GM13977 (cell line): ENCODE measurements at regions of chr20 and their contacts with region 1.

Region 1: GRCh38 chr20:39049684-39050554 is 87.8 kb downstream of the DHX35 start:
- DNase-seq: peak; percentile 87
- CTCF ChIP-seq: peak; percentile 100

Region 2: DNA sequence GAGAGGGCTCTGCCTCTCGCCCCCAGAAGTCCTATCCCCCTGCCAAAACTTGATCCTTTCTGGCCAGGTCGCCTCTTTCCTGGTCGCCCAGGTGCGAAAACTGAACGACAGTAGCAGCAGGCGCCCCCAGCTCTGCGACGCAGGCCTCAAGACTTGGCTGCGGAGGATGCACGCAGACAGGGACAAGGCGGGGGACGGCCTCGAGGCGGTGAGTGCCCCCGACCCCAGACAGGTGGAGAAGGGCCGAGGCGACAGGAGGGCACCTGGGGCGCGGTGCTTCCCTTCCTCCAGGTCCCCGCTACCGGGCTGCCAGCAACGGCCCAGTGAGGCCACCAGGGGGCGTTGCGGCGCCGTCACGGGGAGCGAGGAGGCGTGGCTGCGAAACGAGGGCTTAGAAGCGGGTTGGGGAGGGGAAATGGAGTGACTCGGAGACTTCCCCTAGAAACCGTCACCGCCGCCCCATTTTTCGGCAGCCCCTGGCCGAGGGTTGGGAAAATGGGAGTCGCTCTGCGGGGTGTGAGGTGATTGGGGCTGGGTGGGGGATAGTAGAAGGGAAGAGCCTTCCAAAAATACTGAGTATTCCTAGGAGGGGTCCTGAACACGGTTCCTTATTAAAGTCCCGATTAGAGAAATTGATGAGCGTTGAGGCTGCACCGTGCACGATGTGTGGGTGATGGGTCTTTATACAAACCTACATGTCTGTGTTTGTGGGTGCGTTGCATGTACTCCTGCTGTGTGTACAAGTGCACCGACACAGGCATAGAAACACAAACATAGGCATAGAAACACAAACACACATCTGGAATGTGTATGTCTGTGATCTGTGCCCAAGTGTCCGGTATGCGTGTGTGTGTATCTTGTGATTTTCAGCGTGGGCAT is 403.7 kb before region 1 on chr20:
- in situ Hi-C with region 1: loop called (anchors 10 kb)
- DNase-seq: peak; percentile 91
- CTCF ChIP-seq: peak; percentile 98

Region 3: DNA sequence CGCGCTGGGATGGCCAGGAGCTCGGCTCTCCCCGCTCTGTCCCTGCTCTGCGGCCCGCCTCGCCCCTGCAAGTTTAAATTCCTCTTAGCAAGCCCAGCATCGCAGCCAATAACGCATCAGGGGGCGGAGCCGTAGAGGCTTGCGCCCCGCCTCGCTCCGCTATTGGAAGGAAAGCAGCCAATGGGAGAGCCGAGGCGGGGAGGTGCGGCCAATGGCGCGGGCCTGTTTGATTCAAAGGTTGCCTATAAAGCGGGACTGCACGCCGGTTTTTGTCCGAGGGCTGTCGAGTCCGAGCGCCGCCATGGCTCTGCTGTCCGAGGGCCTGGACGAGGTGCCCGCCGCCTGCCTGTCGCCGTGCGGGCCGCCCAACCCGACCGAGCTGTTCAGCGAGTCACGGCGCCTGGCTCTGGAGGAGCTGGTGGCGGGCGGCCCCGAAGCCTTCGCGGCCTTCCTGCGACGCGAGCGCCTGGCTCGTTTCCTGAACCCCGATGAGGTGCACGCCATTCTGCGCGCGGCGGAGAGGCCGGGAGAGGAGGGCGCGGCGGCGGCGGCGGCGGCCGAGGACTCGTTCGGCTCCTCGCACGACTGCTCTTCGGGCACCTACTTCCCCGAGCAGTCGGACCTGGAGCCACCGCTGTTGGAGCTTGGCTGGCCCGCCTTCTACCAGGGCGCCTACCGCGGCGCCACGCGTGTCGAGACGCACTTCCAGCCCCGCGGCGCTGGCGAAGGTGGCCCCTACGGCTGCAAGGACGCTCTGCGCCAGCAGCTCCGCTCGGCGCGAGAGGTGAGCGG is 123.6 kb before region 1 on chr20 and contains the start of gene FAM83D:
- in situ Hi-C with region 1: loop called (anchors 10 kb)
- DNase-seq: peak; percentile 100
- CTCF ChIP-seq: no peak

Region 4: DNA sequence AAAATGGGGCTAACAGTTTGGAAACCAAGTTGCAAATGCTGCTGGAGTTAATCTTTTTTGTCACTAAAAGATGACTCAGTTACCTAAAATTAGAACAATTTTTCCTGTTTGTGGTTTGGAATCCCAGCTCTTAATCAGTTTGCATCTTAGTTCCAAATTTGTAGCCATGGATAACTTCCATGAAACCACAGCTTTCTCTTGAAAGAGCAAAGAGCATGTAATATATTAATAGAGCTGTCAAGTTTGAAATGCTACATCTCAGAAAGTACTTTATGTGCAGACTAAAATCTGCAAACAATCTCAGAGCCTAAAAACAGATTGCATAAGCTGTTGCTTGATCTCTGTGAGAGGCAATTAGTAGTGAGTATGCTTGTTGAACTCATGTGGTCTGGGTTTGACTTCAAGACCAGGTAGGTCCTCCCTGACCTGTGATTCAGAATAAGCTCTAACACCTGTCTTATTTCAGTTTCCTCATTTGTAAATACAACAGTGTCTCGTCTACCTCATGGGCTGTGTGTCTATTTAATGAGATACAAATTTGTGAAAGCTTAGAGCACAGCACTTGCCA is 64.2 kb before region 1 on chr20:
- in situ Hi-C with region 1: no loop called
- DNase-seq: peak; percentile 22
- CTCF ChIP-seq: no peak